ENCODE measurements at regions of chrX and their contacts with region 1.

Region 1: GRCh38 chrX:76253432-76253831 is 80.6 kb downstream of the PBDC1 start:
- DNase-seq: peak; percentile 12
- H3K4me3 ChIP-seq: no peak overlapping the region
- H3K27ac ChIP-seq: no peak overlapping the region
- H3K4me1 ChIP-seq: no peaks in the 10 kb centered on the region
- H3K27me3 ChIP-seq: no peaks in the 10 kb centered on the region
- CTCF ChIP-seq: peak in 1 of 2 donors; percentile 19
- POLR2A ChIP-seq: no peak

Region 2: GRCh38 chrX:76155786-76156185 is 97.6 kb before region 1 on chrX:
- CTCF ChIA-PET with region 1: no interaction called
- POLR2A ChIA-PET with region 1: no interaction called
- dilution Hi-C with region 1: no loop called
- intact Hi-C with region 1: loop called (anchors 10 kb)
- DNase-seq: no peak
- H3K4me3 ChIP-seq: no peak overlapping the region
- H3K27ac ChIP-seq: no peak overlapping the region
- H3K4me1 ChIP-seq: no peaks in the 10 kb centered on the region
- H3K27me3 ChIP-seq: no peaks in the 10 kb centered on the region
- CTCF ChIP-seq: no peak
- POLR2A ChIP-seq: no peak

Region 3: DNA sequence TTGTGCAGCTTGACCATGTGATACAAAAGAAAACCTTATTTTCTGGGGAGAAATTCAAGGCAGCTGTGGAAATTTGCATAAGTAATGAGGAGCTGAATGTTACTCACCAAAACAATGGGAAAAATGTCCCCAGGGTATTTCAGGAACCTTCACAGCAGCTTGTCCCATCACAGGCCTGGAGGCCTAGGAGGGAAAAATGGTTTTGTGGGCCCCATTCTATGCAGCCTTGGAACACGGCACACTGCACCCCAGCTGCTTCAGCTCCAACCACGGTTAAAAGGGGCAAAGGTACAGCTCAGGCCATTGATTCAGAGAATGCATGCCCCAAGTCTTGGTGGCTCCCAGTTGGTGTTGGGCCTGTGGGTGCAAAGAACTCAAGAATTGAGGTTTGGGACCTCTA is 390.2 kb after region 1 on chrX:
- CTCF ChIA-PET with region 1: no interaction called
- POLR2A ChIA-PET with region 1: no interaction called
- dilution Hi-C with region 1: no loop called
- intact Hi-C with region 1: no loop called
- DNase-seq: no peak
- H3K4me3 ChIP-seq: no peak overlapping the region
- H3K27ac ChIP-seq: no peak overlapping the region
- H3K4me1 ChIP-seq: no peaks in the 10 kb centered on the region
- H3K27me3 ChIP-seq: no peaks in the 10 kb centered on the region
- CTCF ChIP-seq: no peak
- POLR2A ChIP-seq: no peak

Region 4: DNA sequence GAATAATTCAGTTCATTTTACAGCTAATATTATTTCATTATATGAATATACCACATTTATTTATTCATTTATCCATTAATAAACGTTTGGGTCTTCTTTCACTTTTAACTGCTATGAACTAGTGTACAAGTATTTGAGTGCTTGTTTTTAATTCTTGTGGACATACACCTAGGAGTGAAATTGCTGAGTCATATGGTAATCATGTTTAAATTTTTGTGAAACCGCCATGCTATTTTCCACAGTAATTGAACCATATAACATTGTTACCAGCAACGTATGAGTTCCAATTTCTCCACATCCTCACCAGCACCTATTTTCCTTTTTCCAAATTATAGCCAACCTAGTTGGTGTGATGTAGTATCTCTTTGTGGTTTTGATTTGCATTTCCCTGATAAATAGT is 562.3 kb after region 1 on chrX:
- CTCF ChIA-PET with region 1: no interaction called
- POLR2A ChIA-PET with region 1: no interaction called
- dilution Hi-C with region 1: no loop called
- intact Hi-C with region 1: no loop called
- DNase-seq: no peak
- H3K4me3 ChIP-seq: no peak overlapping the region
- H3K27ac ChIP-seq: no peak overlapping the region
- H3K4me1 ChIP-seq: no peaks in the 10 kb centered on the region
- H3K27me3 ChIP-seq: no peaks in the 10 kb centered on the region
- CTCF ChIP-seq: no peak
- POLR2A ChIP-seq: no peak

Region 5: GRCh38 chrX:77017093-77017492 is 763.7 kb after region 1 on chrX:
- CTCF ChIA-PET with region 1: no interaction called
- POLR2A ChIA-PET with region 1: no interaction called
- dilution Hi-C with region 1: no loop called
- intact Hi-C with region 1: no loop called
- DNase-seq: no peak
- H3K4me3 ChIP-seq: no peak overlapping the region
- H3K27ac ChIP-seq: no peak overlapping the region
- H3K4me1 ChIP-seq: no peaks in the 10 kb centered on the region
- H3K27me3 ChIP-seq: no peaks in the 10 kb centered on the region
- CTCF ChIP-seq: no peak
- POLR2A ChIP-seq: no peak

Measured in endothelial cell of umbilical vein (primary cell).